Caco-2 (cell line): ENCODE measurements at regions of chr5 and their contacts with region 1.

Region 1: DNA sequence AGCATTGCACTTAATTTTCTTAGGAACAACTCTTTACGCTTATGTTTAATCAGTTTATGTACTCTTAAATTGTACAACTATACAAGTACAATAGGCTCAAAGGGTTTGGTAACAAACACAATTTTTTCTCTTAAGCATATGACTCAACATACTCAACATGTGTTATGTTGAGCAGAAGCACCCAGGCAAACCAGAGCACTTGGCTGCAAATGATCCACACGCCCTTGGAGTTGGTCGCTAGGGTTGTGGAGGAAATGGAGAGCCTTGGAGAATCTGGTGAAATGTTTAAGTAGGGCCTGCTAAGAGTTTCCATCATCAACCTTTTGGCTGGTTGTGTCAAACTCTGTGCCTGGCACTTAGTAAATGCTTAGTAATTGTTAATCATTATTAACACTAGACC is 25.1 kb upstream of the MIER3 start:
- DNase-seq: no peak
- H3K4me3 ChIP-seq: no peak overlapping the region
- H3K4me3 Mint-ChIP-seq: no peak overlapping the region
- H3K27ac Mint-ChIP-seq: no peak overlapping the region
- H3K4me1 ChIP-seq: peaks cover 38% of the 10 kb centered on the region
- H3K4me1 Mint-ChIP-seq: peaks cover 24% of the 10 kb centered on the region
- H3K27me3 ChIP-seq: no peaks in the 10 kb centered on the region
- H3K27me3 Mint-ChIP-seq: no peaks in the 10 kb centered on the region
- CTCF ChIP-seq: no peak

Region 2: GRCh38 chr5:56962286-56962685 is 14.7 kb before region 1 on chr5:
- CTCF ChIA-PET with region 1: no interaction called
- POLR2A ChIA-PET with region 1: no interaction called
- intact Hi-C with region 1: loop called (anchors 2 kb)
- DNase-seq: peak; percentile 59 to 64
- H3K4me3 ChIP-seq: no peak overlapping the region
- H3K4me3 Mint-ChIP-seq: no peak overlapping the region
- H3K27ac Mint-ChIP-seq: peak overlapping the region; percentile 6
- H3K4me1 ChIP-seq: peaks cover 29% of the 10 kb centered on the region
- H3K4me1 Mint-ChIP-seq: peaks cover 46% of the 10 kb centered on the region
- H3K27me3 ChIP-seq: no peaks in the 10 kb centered on the region
- H3K27me3 Mint-ChIP-seq: no peaks in the 10 kb centered on the region
- CTCF ChIP-seq: no peak